ENCODE measurements at regions of chr12 and their contacts with region 1.

Region 1: DNA sequence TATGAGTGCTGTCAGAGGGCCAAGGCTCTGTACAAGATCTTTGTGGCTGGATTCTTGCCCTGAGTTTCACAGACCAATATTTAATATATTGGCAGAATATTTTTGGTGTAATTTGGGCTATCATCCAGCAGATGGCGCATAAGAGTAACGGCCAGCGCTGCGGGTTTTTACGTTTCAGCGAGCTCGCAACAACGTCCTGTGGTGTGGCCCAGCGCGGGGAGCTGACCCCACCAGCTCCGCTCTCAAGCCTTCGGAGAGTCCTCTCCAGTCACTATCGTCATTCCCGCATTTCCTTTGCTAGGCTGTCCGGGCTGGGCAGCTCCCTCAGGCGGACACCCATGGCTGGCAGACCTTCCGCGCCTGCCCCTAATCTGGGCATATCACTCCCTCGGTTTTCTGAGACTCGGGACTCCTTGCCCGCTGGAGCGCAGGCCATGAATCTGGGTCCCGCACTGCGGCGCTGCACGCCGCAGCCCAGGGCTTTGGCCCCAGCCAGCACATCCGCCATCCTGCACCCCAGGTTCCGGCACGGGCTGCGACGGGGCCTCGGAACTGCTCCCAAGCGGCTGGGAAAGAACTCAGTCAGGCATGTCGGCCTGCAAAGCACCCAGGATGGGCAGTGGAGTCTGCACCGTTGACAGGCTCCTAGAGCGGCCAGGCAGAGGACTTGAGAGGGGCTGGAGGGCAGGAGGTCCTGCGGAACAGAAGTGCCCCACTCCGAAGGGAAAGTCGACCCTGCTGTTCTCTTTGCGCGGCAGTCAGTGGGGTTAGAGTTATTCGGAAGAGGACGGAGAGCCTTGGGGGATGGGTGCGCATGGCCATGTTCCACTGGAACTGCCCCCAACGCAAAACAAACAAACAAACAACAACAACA is 18.4 kb downstream of the OLR1 start:
- DNase-seq: peak; percentile 63
- H3K4me3 Mint-ChIP-seq: peak overlapping the region; percentile 64
- H3K27ac Mint-ChIP-seq: no peak overlapping the region
- H3K4me1 Mint-ChIP-seq: no peaks in the 10 kb centered on the region
- H3K27me3 Mint-ChIP-seq: no peaks in the 10 kb centered on the region
- CTCF ChIP-seq: peak; percentile 56

Region 2: GRCh38 chr12:8860165-8860961 is 1293.1 kb before region 1 on chr12:
- CTCF ChIA-PET with region 1: no interaction called
- POLR2A ChIA-PET with region 1: no interaction called
- intact Hi-C with region 1: no loop called
- DNase-seq: peak; percentile 46
- H3K4me3 Mint-ChIP-seq: no peak overlapping the region
- H3K27ac Mint-ChIP-seq: no peak overlapping the region
- H3K4me1 Mint-ChIP-seq: no peaks in the 10 kb centered on the region
- H3K27me3 Mint-ChIP-seq: no peaks in the 10 kb centered on the region
- CTCF ChIP-seq: peak; percentile 41

Region 3: DNA sequence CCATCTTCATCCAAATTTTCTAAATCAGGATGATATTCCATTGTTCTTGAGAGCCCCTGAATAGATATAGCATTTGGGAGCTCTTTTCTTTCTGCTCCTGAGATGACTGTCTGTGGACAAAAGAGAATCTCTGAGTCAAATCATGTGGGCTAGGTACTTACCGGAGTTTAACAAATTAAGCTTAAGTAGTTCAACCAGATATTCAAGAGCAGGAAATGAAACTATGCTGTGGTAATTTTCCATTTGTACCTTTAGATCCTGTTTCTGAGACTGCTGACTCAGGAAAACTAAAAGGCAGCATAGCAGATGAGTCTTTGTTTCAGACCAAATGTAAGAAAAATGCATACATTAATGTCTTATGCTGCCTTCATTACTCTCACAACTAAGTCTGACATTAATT is 23.5 kb before region 1 on chr12 and contains the start of gene CLEC7A:
- CTCF ChIA-PET with region 1: interaction called, 11 read pairs
- POLR2A ChIA-PET with region 1: no interaction called
- intact Hi-C with region 1: no loop called
- DNase-seq: no peak
- H3K4me3 Mint-ChIP-seq: no peak within 1 kb of the TSS
- H3K27ac Mint-ChIP-seq: no peak within 1 kb of the TSS
- H3K4me1 Mint-ChIP-seq: no peaks in the 10 kb centered on the region
- H3K27me3 Mint-ChIP-seq: no peaks in the 10 kb centered on the region
- CTCF ChIP-seq: no peak
- total RNA-seq, gene CLEC7A: not detected in 2 replicates

Region 4: GRCh38 chr12:10167588-10167987 is 14.1 kb after region 1 on chr12:
- CTCF ChIA-PET with region 1: interaction called, 25 read pairs
- POLR2A ChIA-PET with region 1: interaction called, 4 read pairs
- intact Hi-C with region 1: no loop called
- DNase-seq: peak; percentile 72
- H3K4me3 Mint-ChIP-seq: no peak overlapping the region
- H3K27ac Mint-ChIP-seq: no peak overlapping the region
- H3K4me1 Mint-ChIP-seq: peaks cover 26% of the 10 kb centered on the region
- H3K27me3 Mint-ChIP-seq: no peaks in the 10 kb centered on the region
- CTCF ChIP-seq: no peak

Region 5: GRCh38 chr12:10190558-10191388 is 37.3 kb after region 1 on chr12:
- CTCF ChIA-PET with region 1: interaction called, 255 read pairs
- POLR2A ChIA-PET with region 1: interaction called, 20 read pairs
- intact Hi-C with region 1: loop called (anchors 1 kb)
- DNase-seq: peak; percentile 80
- H3K4me3 Mint-ChIP-seq: no peak overlapping the region
- H3K27ac Mint-ChIP-seq: no peak overlapping the region
- H3K4me1 Mint-ChIP-seq: peaks cover 19% of the 10 kb centered on the region
- H3K27me3 Mint-ChIP-seq: no peaks in the 10 kb centered on the region
- CTCF ChIP-seq: peak; percentile 73

Region 6: DNA sequence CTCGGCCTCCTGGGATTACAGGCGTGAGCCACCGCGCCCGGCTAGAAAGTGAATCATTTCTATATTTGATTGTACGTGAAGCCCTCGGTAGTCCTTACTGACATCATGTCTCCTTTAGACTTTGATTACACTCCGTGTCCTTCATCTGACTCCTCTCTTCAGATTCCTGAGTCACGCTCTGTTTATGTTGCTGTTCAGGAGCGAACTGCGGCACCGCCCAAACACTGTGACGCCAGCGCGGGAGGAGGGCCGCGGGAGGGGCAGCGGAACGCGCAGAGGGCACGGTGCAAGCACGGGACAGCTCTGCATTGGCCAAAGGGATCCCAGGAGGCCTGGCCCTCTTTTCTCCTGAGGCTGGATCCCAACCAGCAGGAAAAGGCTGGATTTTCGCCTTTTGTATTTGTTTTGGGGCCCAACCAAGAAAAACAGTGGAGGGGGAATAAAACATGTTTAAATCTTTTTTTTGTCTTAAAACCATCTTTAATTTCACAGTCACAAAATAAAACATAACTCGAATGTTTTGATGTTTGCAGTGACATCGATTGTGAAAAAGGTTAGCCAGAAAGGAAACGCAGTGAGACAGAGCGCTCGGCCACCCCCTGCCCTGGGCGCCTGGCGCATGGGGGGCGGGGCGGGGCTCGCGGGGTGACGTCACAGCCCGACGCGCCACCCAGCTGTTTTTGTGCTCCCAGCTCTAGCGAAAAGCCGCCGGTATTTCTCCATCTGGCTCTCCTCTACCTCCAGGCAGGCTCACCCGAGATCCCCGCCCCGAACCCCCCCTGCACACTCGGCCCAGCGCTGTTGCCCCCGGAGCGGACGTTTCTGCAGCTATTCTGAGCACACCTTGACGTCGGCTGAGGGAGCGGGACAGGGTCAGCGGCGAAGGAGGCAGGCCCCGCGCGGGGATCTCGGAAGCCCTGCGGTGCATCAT is 59.0 kb after region 1 on chr12 and contains the start of gene GABARAPL1:
- CTCF ChIA-PET with region 1: interaction called, 9 read pairs
- POLR2A ChIA-PET with region 1: interaction called, 22 read pairs
- intact Hi-C with region 1: no loop called
- DNase-seq: peak; percentile 98
- H3K4me3 Mint-ChIP-seq: peak within 1 kb of the TSS; percentile 88
- H3K27ac Mint-ChIP-seq: peak within 1 kb of the TSS; percentile 99
- H3K4me1 Mint-ChIP-seq: peaks cover 21% of the 10 kb centered on the region
- H3K27me3 Mint-ChIP-seq: no peaks in the 10 kb centered on the region
- CTCF ChIP-seq: no peak
- total RNA-seq, gene GABARAPL1: 19.7 and 28.1 TPM in 2 replicates

Region 7: GRCh38 chr12:10491766-10492165 is 338.3 kb after region 1 on chr12:
- CTCF ChIA-PET with region 1: no interaction called
- POLR2A ChIA-PET with region 1: no interaction called
- intact Hi-C with region 1: no loop called
- DNase-seq: no peak
- H3K4me3 Mint-ChIP-seq: no peak overlapping the region
- H3K27ac Mint-ChIP-seq: no peak overlapping the region
- H3K4me1 Mint-ChIP-seq: no peaks in the 10 kb centered on the region
- H3K27me3 Mint-ChIP-seq: no peaks in the 10 kb centered on the region
- CTCF ChIP-seq: no peak

Region 8: GRCh38 chr12:10562306-10562933 is 408.9 kb after region 1 on chr12:
- CTCF ChIA-PET with region 1: interaction called, 3 read pairs
- POLR2A ChIA-PET with region 1: no interaction called
- intact Hi-C with region 1: loop called (anchors 1 kb)
- DNase-seq: peak; percentile 61
- H3K4me3 Mint-ChIP-seq: no peak overlapping the region
- H3K27ac Mint-ChIP-seq: no peak overlapping the region
- H3K4me1 Mint-ChIP-seq: peaks cover 6% of the 10 kb centered on the region
- H3K27me3 Mint-ChIP-seq: no peaks in the 10 kb centered on the region
- CTCF ChIP-seq: peak; percentile 61

Measured in MCF 10A (cell line).